IMR-90 (cell line): ENCODE measurements at regions of chr6 and their contacts with region 1.

Region 1: GRCh38 chr6:5995949-5996713 is 10.6 kb downstream of the NRN1 start:
- DNase-seq: peak; percentile 19
- ATAC-seq: peak; percentile 75
- H3K4me3 ChIP-seq: peak overlapping the region; percentile 87
- H3K27ac ChIP-seq: no peak overlapping the region
- H3K4me1 ChIP-seq: no peaks in the 10 kb centered on the region; the same call in 1 of the 2 replicates
- H3K27me3 ChIP-seq: peaks cover 72% of the 10 kb centered on the region
- CTCF ChIP-seq: 0 out of 2 replicates have a peak, but pooled peaks have one; percentile 24
- POLR2A ChIP-seq: no peak
- RAD21 ChIP-seq: no peak

Region 2: DNA sequence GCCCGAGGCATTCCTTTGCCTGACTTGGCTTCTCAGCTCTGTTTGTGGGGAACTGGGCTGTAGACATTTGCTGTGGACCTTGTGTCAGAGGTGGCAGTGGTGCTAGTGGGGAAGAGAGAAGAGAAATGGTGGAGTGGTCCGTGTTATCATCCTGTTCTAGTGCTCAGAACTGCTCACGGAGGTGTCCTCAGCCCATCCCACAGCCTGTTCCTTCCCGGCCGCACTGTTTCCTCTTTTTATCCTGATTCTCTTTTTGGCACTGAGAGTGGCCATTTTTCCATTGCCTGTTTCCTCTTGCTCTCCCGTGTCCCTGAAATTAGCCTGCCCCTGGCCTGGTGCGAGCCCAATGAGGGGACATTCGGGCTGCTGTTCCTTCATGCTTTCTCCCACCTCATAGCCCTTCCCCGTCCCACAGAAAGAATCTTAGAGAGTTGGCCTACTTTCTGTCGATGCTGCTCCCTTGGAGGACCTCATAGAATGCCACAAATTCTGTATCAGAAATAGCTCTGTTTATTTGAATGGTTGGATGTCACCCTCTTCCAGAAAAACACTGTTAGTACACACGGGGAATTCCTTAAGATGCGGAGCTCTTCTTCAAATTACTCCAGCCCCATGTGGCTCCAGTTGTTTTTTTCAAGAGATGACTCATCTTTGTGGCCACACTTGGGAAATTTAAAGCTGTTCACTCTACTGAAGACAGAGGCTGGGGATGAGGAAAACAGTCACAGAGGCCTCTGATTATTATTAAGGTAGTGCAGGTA is 708.7 kb before region 1 on chr6:
- CTCF ChIA-PET with region 1: no interaction called
- POLR2A ChIA-PET with region 1: no interaction called
- dilution Hi-C with region 1: no loop called
- in situ Hi-C with region 1: no loop called
- intact Hi-C with region 1: no loop called
- DNase-seq: peak; percentile 88
- ATAC-seq: peak; percentile 98
- H3K4me3 ChIP-seq: no peak overlapping the region
- H3K27ac ChIP-seq: no peak overlapping the region
- H3K4me1 ChIP-seq: peaks cover 8% of the 10 kb centered on the region
- H3K27me3 ChIP-seq: no peaks in the 10 kb centered on the region
- CTCF ChIP-seq: 0 out of 2 replicates have a peak, but pooled peaks have one; percentile 3
- POLR2A ChIP-seq: no peak
- RAD21 ChIP-seq: no peak

Region 3: DNA sequence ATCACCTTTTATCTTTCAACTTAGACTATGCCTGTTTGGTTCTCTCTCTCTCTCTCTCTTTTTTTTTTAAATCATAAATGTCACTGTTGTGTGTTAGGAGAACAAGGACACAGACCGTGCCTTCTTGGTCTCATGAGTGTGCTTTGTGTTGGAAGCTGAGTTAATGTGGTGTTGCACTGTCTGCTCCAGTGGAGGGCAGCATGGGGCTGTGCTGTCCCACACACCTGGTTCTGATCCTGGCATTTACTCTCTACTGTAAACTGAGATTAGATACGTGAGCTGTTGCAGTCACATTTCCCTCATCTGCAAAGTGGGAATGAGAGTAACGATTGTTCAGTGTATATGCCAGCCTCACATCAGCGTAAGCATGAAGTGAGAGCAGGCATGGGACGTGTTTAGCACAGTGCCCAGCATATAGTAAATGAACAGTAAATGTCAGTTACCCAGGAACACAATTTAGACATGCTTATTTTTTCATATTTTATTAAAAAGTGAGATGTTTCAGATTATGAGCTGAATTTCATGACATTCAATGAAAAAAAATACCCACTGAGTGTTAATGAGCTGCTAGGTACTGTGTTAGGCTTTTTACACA is 573.7 kb before region 1 on chr6:
- CTCF ChIA-PET with region 1: interaction called, 3 read pairs
- POLR2A ChIA-PET with region 1: no interaction called
- dilution Hi-C with region 1: no loop called
- in situ Hi-C with region 1: no loop called
- intact Hi-C with region 1: loop called (anchors 5 kb)
- DNase-seq: peak; percentile 62
- ATAC-seq: peak; percentile 94
- H3K4me3 ChIP-seq: no peak overlapping the region
- H3K27ac ChIP-seq: no peak overlapping the region
- H3K4me1 ChIP-seq: peaks cover 5% of the 10 kb centered on the region; the same call in 1 of the 2 replicates
- H3K27me3 ChIP-seq: no peaks in the 10 kb centered on the region
- CTCF ChIP-seq: peak; percentile 72
- POLR2A ChIP-seq: no peak
- RAD21 ChIP-seq: peak; percentile 86

Region 4: GRCh38 chr6:5937169-5937909 is 58.8 kb before region 1 on chr6:
- CTCF ChIA-PET with region 1: no interaction called
- POLR2A ChIA-PET with region 1: no interaction called
- dilution Hi-C with region 1: no loop called
- in situ Hi-C with region 1: no loop called
- intact Hi-C with region 1: no loop called
- DNase-seq: no peak
- ATAC-seq: no peak
- H3K4me3 ChIP-seq: no peak overlapping the region
- H3K27ac ChIP-seq: no peak overlapping the region
- H3K4me1 ChIP-seq: no peaks in the 10 kb centered on the region
- H3K27me3 ChIP-seq: no peaks in the 10 kb centered on the region
- CTCF ChIP-seq: no peak
- POLR2A ChIP-seq: no peak
- RAD21 ChIP-seq: no peak